ENCODE measurements at regions of chr11 and their contacts with region 1.

Region 1: DNA sequence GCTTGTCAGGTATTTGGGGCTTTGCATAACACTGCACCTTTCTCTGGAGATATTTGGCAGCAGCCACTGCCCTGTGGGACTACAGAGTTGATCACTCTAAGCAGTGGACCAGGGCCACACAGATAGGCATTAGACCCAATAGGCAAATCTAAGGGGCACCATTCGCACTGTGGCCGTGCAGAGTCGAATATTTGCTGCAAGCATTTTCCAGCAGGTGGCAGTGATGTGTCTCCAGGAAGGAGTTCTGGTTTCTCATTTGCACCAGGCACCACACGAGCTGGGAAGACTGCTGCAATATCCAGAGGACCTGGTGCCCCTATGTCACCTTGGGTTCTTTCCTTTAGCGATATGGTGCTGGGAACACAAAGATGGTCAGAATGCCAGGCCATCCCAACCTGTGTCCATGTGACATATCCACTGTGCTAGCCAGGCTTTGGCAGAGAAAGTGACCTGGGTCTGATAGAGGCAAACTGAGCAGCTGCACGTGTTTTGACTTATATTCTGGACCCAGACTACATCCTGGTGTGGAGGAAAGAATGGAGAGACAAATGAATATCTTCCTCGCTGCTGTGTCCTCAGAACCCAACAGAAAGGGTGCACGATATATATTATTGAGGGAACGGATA is 318.7 kb downstream of the BUD13 start:
- DNase-seq: peak; percentile 34
- ATAC-seq: peak in 1 of 2 donors; percentile 56

Region 2: DNA sequence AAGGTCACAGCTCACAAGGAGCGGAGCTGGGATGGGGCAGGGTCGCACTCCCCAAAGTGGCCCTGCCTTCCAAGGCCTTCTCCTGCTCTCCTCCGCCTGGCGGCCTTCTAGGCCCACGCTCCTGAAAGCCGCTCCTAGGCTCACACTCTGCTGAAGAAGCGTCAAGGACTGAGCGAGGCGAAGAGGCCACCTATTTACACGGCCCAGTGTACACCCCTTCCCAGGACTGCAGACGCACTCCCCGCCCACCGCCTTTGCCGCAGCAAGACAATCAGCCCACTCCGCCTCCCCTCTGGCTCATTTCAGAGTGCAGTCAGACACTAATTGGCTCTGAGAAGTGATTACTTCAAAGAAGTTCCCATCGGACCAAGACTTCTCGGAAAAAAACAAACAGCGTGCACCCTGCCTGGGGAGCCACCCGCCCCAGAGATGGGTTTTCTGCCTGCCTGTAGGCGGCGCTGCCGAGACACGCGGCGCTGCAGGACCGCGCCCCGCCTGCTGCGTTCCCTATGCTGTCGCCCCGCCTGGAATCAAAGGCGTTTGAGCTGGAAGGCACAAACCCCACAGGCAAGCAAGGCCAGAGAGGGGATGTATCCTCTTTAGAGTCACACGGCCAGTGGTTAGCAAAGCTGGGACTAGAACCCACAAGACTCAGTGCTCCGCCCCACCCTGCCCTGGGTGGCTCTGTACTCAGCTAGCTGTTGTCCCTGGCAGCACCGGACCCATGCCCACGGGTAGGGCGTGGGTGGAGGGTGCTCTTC is 96.2 kb before region 1 on chr11:
- intact Hi-C with region 1: no loop called
- DNase-seq: no peak
- ATAC-seq: peak in 1 of 2 donors; percentile 35

Region 3: DNA sequence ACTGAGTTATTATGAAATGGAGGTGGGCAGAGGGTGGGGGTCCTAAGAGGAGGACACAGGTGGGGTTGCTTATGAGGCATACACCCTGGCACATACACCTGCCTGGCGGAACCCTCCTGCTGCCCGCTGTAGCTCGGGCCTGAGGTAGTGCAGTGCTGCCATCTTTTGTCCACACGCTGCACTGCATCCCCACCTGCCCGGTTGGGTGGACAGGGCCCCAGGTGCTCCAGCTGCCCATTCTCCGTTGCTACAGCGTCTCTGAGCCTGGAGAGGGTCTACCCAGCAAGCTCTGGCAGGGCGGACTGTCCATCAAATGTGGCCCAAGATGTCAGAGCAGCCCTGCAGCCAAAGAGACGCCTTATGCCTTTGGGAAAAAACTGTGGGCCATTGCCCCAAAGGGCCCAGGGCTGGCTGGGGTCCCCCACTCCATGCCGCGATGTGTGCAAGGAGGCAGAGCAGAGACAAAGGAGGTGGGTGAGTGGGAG is 187.5 kb after region 1 on chr11:
- intact Hi-C with region 1: loop called (anchors 2 to 5 kb)
- DNase-seq: peak; percentile 37
- ATAC-seq: peak; percentile 41 to 81